Activated CD8-positive, alpha-beta memory T cell treated with anti-CD3 and anti-CD28 coated beads, Interleukin-2, amount 10 ng/mL, durations not matched to agents 7 days and 5 days (primary cell): ENCODE measurements at regions of chr11 and their contacts with region 1.

Region 1: GRCh38 chr11:72430741-72431570 is 3.4 kb downstream of the CLPB start:
- DNase-seq: peak; percentile 57
- ATAC-seq: peak; percentile 25
- H3K4me3 Mint-ChIP-seq: no peak overlapping the region
- H3K27ac Mint-ChIP-seq: peak overlapping the region; percentile 42
- H3K4me1 Mint-ChIP-seq: peaks cover 45% of the 10 kb centered on the region
- H3K27me3 Mint-ChIP-seq: no peaks in the 10 kb centered on the region

Region 2: DNA sequence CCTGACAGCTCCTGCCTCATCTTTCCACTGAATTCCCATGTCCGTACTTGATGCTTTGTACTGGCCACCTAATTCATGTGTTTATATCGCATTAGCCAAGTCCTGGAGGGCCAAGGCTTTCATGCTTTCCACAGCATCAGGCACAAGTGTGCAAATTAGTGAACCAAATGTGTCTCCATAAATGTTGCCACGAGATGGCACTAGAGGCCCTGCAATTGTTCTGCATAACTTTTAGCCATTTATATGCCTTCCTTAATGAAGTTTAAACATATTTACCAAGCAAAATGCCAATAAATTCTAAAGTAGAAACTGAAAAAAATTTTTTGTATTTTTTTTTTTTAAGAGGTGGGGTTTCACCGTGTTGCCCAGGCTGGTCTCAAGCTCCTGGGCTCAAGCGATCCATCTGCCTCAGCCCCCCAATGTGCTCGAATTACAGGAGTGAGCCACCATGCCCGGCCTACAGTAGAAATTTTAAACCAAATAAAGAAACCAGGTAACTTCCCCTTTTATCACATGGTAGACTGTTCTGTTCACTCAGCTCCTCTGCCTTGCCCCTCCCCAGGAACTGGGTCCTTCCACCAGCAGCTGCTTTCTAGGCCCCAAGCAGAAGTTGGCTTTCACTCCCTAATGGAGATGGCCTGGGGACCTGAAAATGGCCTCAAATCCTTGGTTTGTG is 453.1 kb before region 1 on chr11:
- CTCF ChIA-PET with region 1: interaction called, 31 read pairs
- DNase-seq: peak; percentile 74
- ATAC-seq: peak; percentile 68
- H3K4me3 Mint-ChIP-seq: no peak overlapping the region
- H3K27ac Mint-ChIP-seq: no peak overlapping the region
- H3K4me1 Mint-ChIP-seq: no peaks in the 10 kb centered on the region
- H3K27me3 Mint-ChIP-seq: no peaks in the 10 kb centered on the region

Region 3: GRCh38 chr11:72189461-72190275 is 241.3 kb before region 1 on chr11:
- CTCF ChIA-PET with region 1: interaction called, 13 read pairs
- DNase-seq: no peak
- ATAC-seq: no peak
- H3K4me3 Mint-ChIP-seq: no peak overlapping the region
- H3K27ac Mint-ChIP-seq: no peak overlapping the region
- H3K4me1 Mint-ChIP-seq: no peaks in the 10 kb centered on the region
- H3K27me3 Mint-ChIP-seq: no peaks in the 10 kb centered on the region

Region 4: DNA sequence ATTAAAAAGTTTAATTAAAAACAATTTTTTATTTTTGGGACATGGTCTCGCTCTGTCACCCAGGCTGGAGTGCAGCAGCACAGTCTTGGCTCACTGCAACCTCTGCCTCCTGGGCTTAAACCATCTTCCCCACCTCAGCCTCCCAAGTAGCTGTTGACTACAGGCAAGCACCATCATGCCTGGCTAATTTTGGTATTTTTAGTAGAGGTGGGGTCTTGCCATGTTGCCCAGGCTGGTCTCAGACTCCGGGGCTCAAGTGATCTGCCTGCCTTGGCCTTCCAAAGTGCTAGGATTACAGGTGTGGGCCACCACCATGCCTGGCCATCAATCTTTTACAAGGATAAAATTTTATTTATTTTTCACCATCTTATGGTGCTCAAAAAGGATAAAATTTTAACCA is 143.7 kb before region 1 on chr11:
- CTCF ChIA-PET with region 1: interaction called, 38 read pairs
- DNase-seq: no peak
- ATAC-seq: no peak
- H3K4me3 Mint-ChIP-seq: no peak overlapping the region
- H3K27ac Mint-ChIP-seq: no peak overlapping the region
- H3K4me1 Mint-ChIP-seq: peaks cover 2% of the 10 kb centered on the region
- H3K27me3 Mint-ChIP-seq: peaks cover 15% of the 10 kb centered on the region

Region 5: GRCh38 chr11:72333661-72334060 is 97.3 kb before region 1 on chr11:
- CTCF ChIA-PET with region 1: interaction called, 56 read pairs
- DNase-seq: peak; percentile 89
- ATAC-seq: peak; percentile 95
- H3K4me3 Mint-ChIP-seq: no peak overlapping the region
- H3K27ac Mint-ChIP-seq: peak overlapping the region; percentile 77
- H3K4me1 Mint-ChIP-seq: peaks cover 40% of the 10 kb centered on the region
- H3K27me3 Mint-ChIP-seq: no peaks in the 10 kb centered on the region

Region 6: DNA sequence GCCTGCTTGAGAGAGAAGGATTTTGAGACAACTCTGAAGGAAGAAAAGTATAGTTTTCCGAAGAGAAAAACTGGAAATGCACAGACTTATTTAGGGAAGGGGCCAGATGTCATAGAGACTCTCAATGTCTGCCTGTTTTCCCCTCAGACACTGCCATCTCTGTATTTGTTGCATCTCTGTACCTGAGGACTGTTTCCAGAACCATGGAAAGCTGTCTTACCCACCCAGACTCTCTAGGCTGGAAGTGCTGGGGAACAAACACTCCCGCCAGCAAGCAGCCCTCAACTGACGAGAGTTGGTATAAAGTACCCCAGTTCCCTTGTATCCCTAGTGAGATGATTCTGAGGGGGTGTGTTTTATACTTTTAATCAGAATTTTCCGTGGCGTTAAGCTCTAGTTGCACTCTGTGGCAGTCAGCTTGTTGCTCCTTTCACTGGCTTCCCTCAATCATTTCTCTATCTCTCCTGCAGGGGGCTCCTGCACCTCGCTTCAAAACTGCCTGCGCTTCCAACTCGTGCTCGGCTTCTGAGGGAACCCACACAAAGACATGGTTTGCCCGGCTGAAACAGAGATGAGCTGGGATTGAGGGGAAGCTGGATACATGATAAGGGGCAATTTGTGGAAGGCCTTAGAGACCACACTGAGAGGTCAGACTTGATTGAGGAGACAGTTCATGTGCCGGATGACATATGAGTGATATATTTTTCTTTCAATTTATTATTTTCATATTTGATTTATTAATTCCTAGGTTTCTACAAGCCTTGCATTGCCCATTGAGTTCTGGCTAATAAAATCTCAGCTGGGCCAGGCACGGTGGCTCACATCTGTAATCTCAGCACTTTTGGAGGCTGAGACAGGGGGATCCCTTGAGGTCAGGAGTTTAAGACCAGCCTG is 40.3 kb after region 1 on chr11:
- CTCF ChIA-PET with region 1: interaction called, 11 read pairs
- DNase-seq: peak; percentile 72
- ATAC-seq: peak; percentile 88
- H3K4me3 Mint-ChIP-seq: peak overlapping the region; percentile 24
- H3K27ac Mint-ChIP-seq: no peak overlapping the region
- H3K4me1 Mint-ChIP-seq: peaks cover 7% of the 10 kb centered on the region
- H3K27me3 Mint-ChIP-seq: peaks cover 58% of the 10 kb centered on the region

Region 7: GRCh38 chr11:73077454-73077853 is 646.5 kb after region 1 on chr11:
- CTCF ChIA-PET with region 1: no interaction called
- DNase-seq: no peak
- ATAC-seq: no peak
- H3K4me3 Mint-ChIP-seq: no peak overlapping the region
- H3K27ac Mint-ChIP-seq: no peak overlapping the region
- H3K4me1 Mint-ChIP-seq: peaks cover 32% of the 10 kb centered on the region
- H3K27me3 Mint-ChIP-seq: no peaks in the 10 kb centered on the region